ENCODE measurements at regions of chr2 and their contacts with region 1.

Region 1: DNA sequence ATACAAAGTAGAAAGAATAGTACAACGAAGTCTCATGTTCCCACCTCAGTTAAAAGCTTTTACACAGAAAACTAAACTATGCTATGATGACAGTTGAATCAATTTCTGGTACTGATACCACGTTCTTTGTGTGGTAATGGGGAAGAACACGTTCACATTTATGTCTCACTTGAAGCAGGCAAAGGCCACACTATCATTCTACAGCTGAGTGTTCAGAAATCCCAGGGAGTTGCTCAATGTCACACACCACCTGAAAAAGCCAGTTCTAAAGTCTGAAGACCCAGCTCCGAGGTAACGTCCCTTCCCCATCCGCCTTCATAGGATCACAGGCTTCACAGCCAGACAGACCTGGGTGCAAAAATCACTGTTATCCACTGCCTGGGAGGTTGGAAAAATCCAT is 8.9 kb downstream of the RNF149 start:
- DNase-seq: no peak
- H3K4me3 ChIP-seq: no peak overlapping the region
- H3K27ac ChIP-seq: no peak overlapping the region
- H3K4me1 ChIP-seq: no peaks in the 10 kb centered on the region
- CTCF ChIP-seq: no peak

Region 2: DNA sequence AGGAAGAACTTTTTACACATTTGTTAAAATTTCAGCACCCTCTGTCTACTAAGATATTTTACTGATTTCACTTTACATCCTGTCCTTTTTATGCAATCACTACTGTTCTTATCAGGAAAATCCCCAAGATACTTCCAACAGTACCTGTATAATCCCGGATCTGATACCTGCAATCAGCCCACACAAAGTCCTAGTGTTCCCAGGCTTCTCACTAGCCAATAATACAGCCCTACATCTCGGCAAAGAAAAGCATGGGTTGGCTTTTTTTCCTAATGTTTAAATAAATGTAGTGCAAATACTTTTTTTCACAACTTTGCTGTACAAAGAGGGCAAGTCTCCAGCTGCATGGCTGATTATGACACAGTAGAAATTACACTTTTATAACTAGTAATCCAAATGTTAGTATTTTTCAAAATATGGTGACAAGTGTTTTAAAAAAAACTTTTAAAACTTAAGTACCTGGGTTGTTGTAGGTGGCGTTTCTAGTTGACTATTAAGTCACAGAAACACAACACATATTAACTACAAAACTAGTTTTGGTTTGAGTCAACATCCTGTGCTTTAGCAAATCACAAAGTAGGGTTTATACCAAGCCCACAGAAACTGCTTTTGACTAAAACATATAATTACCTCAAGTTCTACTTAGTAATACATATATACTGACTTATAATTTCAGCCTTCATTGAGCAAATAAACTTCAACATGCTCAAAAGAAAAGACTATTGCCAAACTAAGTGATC is 27.4 kb before region 1 on chr2:
- CTCF ChIA-PET with region 1: no interaction called
- POLR2A ChIA-PET with region 1: interaction called, 10 read pairs
- intact Hi-C with region 1: no loop called
- DNase-seq: no peak
- H3K4me3 ChIP-seq: no peak overlapping the region
- H3K27ac ChIP-seq: no peak overlapping the region
- H3K4me1 ChIP-seq: no peaks in the 10 kb centered on the region
- CTCF ChIP-seq: no peak

Region 3: GRCh38 chr2:101327863-101328394 is 28.3 kb after region 1 on chr2:
- CTCF ChIA-PET with region 1: no interaction called
- POLR2A ChIA-PET with region 1: interaction called, 10 read pairs
- intact Hi-C with region 1: no loop called
- DNase-seq: no peak
- H3K4me3 ChIP-seq: no peak overlapping the region
- H3K27ac ChIP-seq: no peak overlapping the region
- H3K4me1 ChIP-seq: peaks cover 11% of the 10 kb centered on the region
- CTCF ChIP-seq: no peak